ENCODE measurements at regions of chr4 and their contacts with region 1.

Region 1: GRCh38 chr4:48113967-48114366 is 20.1 kb downstream of the TXK start:
- DNase-seq: no peak

Region 2: GRCh38 chr4:48133669-48134068 is 19.7 kb after region 1 on chr4:
- CTCF ChIA-PET with region 1: interaction called, 15 read pairs
- POLR2A ChIA-PET with region 1: no interaction called
- DNase-seq: no peak

Region 3: GRCh38 chr4:48153791-48154550 is 40.0 kb after region 1 on chr4:
- CTCF ChIA-PET with region 1: no interaction called
- POLR2A ChIA-PET with region 1: no interaction called
- DNase-seq: no peak

Region 4: GRCh38 chr4:48307528-48307927 is 193.6 kb after region 1 on chr4:
- CTCF ChIA-PET with region 1: no interaction called
- POLR2A ChIA-PET with region 1: no interaction called
- DNase-seq: no peak